MCF 10A (cell line): ENCODE measurements at regions of chr19 and their contacts with region 1.

Region 1: GRCh38 chr19:12806239-12807081 is at the start of gene RNASEH2A:
- DNase-seq: peak; percentile 89
- H3K4me3 Mint-ChIP-seq: peak within 1 kb of the TSS; percentile 94
- H3K27ac Mint-ChIP-seq: peak within 1 kb of the TSS; percentile 83
- H3K4me1 Mint-ChIP-seq: peaks cover 15% of the 10 kb centered on the region
- H3K27me3 Mint-ChIP-seq: no peaks in the 10 kb centered on the region
- CTCF ChIP-seq: no peak
- total RNA-seq, gene RNASEH2A: 11.2 and 16.7 TPM in 2 replicates

Region 2: GRCh38 chr19:12777217-12778016 is 29.0 kb before region 1 on chr19:
- CTCF ChIA-PET with region 1: interaction called, 3 read pairs
- POLR2A ChIA-PET with region 1: interaction called, 19 read pairs
- intact Hi-C with region 1: no loop called
- DNase-seq: peak; percentile 80
- H3K4me3 Mint-ChIP-seq: peak overlapping the region; percentile 79
- H3K27ac Mint-ChIP-seq: peak overlapping the region; percentile 81
- H3K4me1 Mint-ChIP-seq: peaks cover 13% of the 10 kb centered on the region
- H3K27me3 Mint-ChIP-seq: no peaks in the 10 kb centered on the region
- CTCF ChIP-seq: peak; percentile 83

Region 3: GRCh38 chr19:12838182-12838885 is 31.9 kb after region 1 on chr19 and contains the start of gene MAST1:
- CTCF ChIA-PET with region 1: no interaction called
- POLR2A ChIA-PET with region 1: interaction called, 7 read pairs
- intact Hi-C with region 1: loop called (anchors 5 kb)
- DNase-seq: peak; percentile 46
- H3K4me3 Mint-ChIP-seq: peak within 1 kb of the TSS; percentile 66
- H3K27ac Mint-ChIP-seq: no peak within 1 kb of the TSS
- H3K4me1 Mint-ChIP-seq: peaks cover 17% of the 10 kb centered on the region
- H3K27me3 Mint-ChIP-seq: peaks cover 14% of the 10 kb centered on the region
- CTCF ChIP-seq: peak; percentile 60
- total RNA-seq, gene MAST1: 1.0 and 1.6 TPM in 2 replicates